AG04450 (cell line): ENCODE measurements at regions of chr3 and their contacts with region 1.

Region 1: DNA sequence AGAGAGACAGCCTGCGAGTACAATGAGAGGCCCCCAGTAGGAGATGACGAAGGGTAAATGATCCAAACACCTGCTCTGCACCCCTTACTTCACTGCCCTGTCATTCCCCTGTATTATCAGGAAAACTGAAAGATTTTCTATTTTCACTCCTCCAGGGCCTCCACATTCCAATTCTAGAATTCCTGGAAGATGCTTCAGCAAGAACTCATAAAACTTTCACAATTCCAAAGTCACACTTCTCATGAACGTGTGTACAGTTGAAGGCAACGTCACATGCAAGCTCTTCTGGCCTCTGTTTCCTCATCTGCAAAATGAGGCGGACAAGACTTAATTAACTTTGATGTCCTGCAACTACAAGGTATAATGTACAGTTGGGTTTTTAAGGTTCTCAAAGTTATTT is 62.8 kb upstream of the SPATA12 start:
- DNase-seq: no peak
- H3K4me3 ChIP-seq: no peak overlapping the region
- H3K27ac ChIP-seq: no peak overlapping the region
- H3K27me3 ChIP-seq: no peaks in the 10 kb centered on the region
- CTCF ChIP-seq: no peak

Region 2: GRCh38 chr3:57007513-57008460 is 10.1 kb after region 1 on chr3:
- CTCF ChIA-PET with region 1: interaction called, 95 read pairs
- POLR2A ChIA-PET with region 1: no interaction called
- DNase-seq: peak; percentile 61
- H3K4me3 ChIP-seq: peak overlapping the region; percentile 18
- H3K27ac ChIP-seq: peak overlapping the region; percentile 91
- H3K27me3 ChIP-seq: peaks cover 2% of the 10 kb centered on the region
- CTCF ChIP-seq: no peak

Region 3: GRCh38 chr3:57017459-57017845 is 19.8 kb after region 1 on chr3:
- CTCF ChIA-PET with region 1: interaction called, 15 read pairs
- POLR2A ChIA-PET with region 1: no interaction called
- DNase-seq: no peak
- H3K4me3 ChIP-seq: no peak overlapping the region
- H3K27ac ChIP-seq: no peak overlapping the region
- H3K27me3 ChIP-seq: no peaks in the 10 kb centered on the region
- CTCF ChIP-seq: no peak

Region 4: GRCh38 chr3:57089043-57089442 is 91.4 kb after region 1 on chr3:
- CTCF ChIA-PET with region 1: interaction called, 17 read pairs
- POLR2A ChIA-PET with region 1: no interaction called
- DNase-seq: no peak
- H3K4me3 ChIP-seq: no peak overlapping the region
- H3K27ac ChIP-seq: no peak overlapping the region
- H3K27me3 ChIP-seq: peaks cover 3% of the 10 kb centered on the region
- CTCF ChIP-seq: no peak

Region 5: GRCh38 chr3:57094575-57094974 is 96.9 kb after region 1 on chr3:
- CTCF ChIA-PET with region 1: interaction called, 17 read pairs
- POLR2A ChIA-PET with region 1: no interaction called
- DNase-seq: peak; percentile 39
- H3K4me3 ChIP-seq: no peak overlapping the region
- H3K27ac ChIP-seq: no peak overlapping the region
- H3K27me3 ChIP-seq: no peaks in the 10 kb centered on the region
- CTCF ChIP-seq: no peak